Activated T-helper 1 cell treated with anti-CD3 and anti-CD28 coated beads, Interleukin-12 subunit alpha, Interleukin-12 subunit beta, Interleukin-2, Interleukin-4 antibody, amounts not matched to agents 30 ng/mL and 10 ng/mL and 1 ng/mL, durations not matched to agents 14 hours and 24 hours and 36 hours (primary cell): ENCODE measurements at regions of chr6 and their contacts with region 1.

Region 1: DNA sequence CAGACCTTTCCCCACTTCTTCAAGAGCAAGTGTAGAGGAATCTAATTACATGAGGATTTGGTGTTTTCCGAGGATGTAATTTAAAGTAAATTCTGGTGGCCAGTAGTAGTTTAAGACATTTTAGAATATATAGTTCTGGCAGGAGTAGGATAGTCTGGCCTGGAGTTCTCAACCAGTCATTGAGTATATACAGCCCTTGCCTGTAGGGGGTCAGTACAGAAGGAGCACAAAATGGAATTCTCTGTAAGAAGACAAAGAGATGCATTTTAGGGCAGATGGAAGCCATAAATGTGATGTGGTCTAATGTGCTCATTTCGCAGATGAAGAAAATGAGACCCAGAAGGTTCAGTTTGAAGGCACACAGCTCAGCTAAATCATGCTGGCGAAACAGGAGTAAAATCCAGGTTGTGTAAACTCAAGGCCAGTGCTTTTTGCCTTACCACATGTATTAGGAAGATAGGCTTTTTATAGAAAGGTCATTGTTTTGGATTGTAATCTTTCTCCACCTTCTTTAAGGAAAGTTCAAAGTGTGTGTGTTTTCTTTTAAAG is 29.5 kb downstream of the QKI start:
- DNase-seq: no peak
- H3K4me3 Mint-ChIP-seq: no peak overlapping the region
- H3K27ac Mint-ChIP-seq: no peak overlapping the region
- H3K4me1 Mint-ChIP-seq: peaks cover 11% of the 10 kb centered on the region
- H3K27me3 Mint-ChIP-seq: no peaks in the 10 kb centered on the region

Region 2: GRCh38 chr6:163427498-163428254 is 16.4 kb before region 1 on chr6:
- intact Hi-C with region 1: loop called (anchors 2 kb)
- DNase-seq: no peak
- H3K4me3 Mint-ChIP-seq: no peak overlapping the region
- H3K27ac Mint-ChIP-seq: no peak overlapping the region
- H3K4me1 Mint-ChIP-seq: peaks cover 16% of the 10 kb centered on the region
- H3K27me3 Mint-ChIP-seq: no peaks in the 10 kb centered on the region

Region 3: DNA sequence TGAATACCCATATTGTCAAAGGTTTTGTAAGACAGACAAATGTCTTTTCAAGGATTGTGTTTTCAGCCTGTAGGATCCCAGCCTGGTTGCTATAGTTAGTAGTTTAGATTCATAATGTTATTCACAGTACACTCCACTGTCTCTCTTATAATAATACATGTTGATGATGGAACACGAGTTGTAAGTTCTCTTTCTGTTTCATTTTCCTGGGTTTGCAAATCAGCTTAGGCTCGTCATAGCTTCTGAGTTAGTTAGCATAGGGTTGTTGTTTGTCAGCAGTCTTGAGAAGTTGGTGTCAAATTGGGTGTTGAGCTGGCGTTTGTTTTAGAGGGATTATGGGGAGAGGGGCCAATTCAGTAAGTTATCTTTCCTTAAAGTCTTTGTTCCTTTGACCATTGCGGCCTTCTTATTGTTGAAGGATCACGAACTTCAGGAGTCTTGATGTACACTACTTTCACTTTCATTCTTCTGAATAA is 16.3 kb after region 1 on chr6:
- intact Hi-C with region 1: no loop called
- DNase-seq: peak; percentile 27
- H3K4me3 Mint-ChIP-seq: peak overlapping the region; percentile 88
- H3K27ac Mint-ChIP-seq: peak overlapping the region; percentile 90
- H3K4me1 Mint-ChIP-seq: peaks cover 74% of the 10 kb centered on the region
- H3K27me3 Mint-ChIP-seq: no peaks in the 10 kb centered on the region

Region 4: DNA sequence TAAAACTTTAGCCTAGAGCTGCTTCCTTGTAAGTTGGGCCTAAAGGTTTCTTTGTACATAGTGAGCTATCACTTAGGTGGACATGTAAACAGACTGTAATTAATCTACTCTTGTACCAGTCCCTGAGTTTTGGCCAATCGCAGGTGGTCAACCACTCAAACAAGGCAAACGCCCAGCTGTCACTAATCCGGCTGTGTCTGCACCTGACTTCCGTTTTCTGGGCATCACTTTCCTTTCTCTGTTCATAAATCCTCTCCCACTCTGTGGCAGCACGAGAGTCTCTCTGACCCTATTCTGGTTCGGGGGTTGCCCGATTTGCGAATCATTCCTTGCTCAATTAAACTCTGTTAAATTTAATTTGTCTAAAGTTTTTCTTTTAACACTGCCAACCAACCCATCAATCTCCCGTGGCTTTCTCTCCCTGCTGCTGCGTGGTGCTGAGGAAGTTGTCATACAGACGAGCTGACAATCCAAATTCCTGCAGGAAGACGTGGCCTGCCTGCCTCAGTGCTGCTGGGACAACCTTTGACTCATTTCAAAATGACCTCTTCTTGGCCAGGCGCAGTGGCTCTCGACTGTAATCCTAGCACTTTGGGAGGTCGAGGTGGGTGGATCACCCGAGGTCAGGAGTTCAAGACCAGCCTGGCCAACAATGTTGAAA is 176.7 kb after region 1 on chr6:
- intact Hi-C with region 1: no loop called
- DNase-seq: no peak
- H3K4me3 Mint-ChIP-seq: no peak overlapping the region
- H3K27ac Mint-ChIP-seq: no peak overlapping the region
- H3K4me1 Mint-ChIP-seq: no peaks in the 10 kb centered on the region
- H3K27me3 Mint-ChIP-seq: no peaks in the 10 kb centered on the region